Posterior vena cava (tissue), 2 donors: ENCODE measurements at regions of chr18 and their contacts with region 1.

Region 1: DNA sequence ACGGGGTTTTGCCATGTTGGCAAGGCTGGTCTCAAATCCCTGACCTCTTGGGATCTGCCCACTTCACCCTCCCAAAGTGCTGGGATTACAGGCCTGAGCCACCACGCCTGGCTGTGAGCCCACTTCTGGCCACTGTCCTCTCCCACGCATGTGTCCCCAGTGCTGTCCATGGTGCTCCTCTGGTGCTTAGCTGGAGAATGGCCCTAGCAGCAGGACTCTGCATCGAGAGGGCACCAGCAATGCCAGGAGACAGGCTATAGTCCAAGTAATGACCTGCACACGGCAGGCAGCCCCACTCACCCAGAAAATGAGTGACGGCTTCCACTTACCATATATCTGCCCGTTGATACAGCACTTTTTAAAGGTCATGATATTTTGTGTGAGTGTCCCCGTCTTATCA is 66.3 kb upstream of the NARS1 start:
- DNase-seq: no peak

Region 2: DNA sequence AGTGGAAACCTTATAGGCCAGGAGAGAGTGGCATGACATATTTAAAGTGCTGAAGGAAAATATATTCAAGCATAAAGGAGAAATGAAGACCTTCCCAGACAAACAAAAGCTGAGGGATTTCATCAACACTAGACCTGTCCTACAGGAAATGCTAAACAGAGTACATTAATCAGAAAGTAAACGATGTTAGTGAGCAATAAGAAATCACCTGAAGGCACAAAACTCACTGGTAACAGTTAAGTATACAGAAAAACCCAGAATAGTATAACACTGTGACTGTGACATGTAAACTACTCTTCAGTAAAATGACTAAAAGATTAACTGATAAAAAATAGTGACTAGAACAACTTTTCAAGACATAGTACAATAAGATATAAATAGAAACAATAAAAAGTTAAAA is 27.7 kb after region 1 on chr18:
- intact Hi-C with region 1: no loop called
- DNase-seq: no peak

Region 3: DNA sequence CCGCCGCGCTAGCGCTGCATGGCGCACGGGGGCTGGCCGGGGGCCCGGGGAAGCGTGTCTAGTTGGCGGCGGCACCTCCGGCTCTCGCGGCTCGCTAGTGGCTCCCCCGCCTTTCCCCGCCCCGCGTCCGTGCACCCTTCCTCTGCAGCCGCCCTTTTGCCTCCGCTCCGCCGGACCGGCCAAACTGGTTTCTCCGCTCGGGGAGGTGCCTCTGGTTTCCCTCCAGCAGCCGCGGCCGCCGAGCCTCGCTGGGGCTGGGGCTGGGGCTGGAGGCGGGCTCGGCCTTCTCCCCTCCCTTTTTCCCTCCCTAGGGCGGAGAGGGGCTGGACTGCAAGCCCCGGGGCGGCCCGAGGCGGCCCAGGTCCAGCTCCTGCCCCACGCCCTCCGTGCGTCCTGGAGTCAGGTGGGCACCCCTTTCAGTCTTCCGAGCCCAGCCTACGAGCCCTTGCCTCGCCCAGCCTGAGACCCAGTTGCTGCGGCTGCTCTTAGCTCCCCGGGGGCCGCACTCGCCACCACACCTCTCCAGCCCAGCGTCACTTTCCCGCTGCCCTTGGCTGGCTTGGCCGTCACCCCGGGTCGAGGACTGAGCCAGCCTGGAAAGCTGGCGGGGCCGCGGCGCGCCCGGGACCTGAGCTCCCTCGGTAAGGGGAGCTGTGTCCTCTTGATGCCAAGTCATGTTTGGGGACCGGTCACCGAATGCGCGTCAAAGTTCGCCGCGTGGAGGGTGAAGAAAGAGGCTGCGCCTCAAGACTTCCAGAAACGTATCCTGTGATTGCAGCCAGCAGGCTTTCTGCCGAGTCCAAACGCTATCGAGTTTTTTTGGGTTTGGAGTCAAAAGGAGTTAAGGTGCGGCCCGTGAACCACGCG is 115.4 kb after region 1 on chr18 and contains the start of gene ATP8B1:
- intact Hi-C with region 1: loop called in 1 of 2 experiments (anchors 10 kb)
- DNase-seq: peak; percentile 93
- total RNA-seq, gene ATP8B1: 27.7 to 47.3 TPM